Activated T-helper 1 cell treated with anti-CD3 and anti-CD28 coated beads, Interleukin-12 subunit alpha, Interleukin-12 subunit beta, Interleukin-2, Interleukin-4 antibody, amounts not matched to agents 30 ng/mL and 10 ng/mL and 1 ng/mL, durations not matched to agents 14 hours and 24 hours and 36 hours (primary cell): ENCODE measurements at regions of chr4 and their contacts with region 1.

Region 1: DNA sequence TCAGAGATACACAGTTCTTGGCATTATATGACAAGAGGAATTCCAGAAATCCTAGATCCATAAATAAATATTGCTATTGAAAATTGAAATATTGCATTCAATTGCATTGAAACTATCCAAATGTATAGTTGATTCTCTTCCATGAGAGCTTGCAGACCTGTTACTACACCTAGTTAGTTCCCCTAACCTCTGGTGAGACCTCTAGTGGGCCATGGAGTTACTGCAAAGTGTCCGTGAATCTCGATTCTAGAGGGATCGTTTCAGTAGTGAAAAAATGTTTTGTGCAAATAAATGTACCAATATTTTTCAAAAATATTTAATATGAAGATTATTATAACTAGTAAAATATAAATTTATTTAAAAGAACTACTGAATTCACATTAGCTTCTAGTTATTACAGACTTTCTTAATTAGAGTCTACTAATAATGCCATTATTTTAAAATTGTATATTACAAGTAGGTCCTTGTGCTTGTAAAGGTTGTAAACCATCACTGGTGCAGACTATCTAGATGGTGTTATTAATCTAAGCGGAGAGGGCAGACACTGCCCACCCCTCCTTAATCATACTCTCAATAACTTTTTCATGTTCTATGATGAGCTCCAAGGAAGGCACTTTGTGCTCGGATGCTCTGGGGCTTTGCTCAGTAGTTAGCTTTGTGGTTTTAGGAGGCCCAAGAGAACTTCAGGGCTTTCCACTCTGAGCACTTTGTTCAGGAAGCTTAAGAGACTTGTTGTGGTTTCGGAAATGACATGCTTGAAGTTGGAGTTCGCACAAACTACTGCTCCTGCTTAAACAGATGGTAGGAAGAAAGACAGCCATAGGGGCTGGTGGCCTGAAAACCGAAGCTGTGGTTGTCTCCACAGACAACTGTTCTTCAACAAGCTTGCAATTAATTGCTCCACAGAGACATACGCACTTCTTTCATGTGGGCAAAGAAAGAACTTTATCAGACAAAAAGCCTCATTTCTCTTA is 42.8 kb downstream of the IL21 start:
- DNase-seq: peak; percentile 70
- H3K4me3 Mint-ChIP-seq: peak overlapping the region; percentile 80
- H3K27ac Mint-ChIP-seq: peak overlapping the region; percentile 96
- H3K4me1 Mint-ChIP-seq: peaks cover 63% of the 10 kb centered on the region
- H3K27me3 Mint-ChIP-seq: no peaks in the 10 kb centered on the region

Region 2: GRCh38 chr4:121900132-121900983 is 677.7 kb before region 1 on chr4:
- intact Hi-C with region 1: loop called (anchors 1 kb)
- DNase-seq: peak; percentile 24
- H3K4me3 Mint-ChIP-seq: no peak overlapping the region
- H3K27ac Mint-ChIP-seq: no peak overlapping the region
- H3K4me1 Mint-ChIP-seq: peaks cover 6% of the 10 kb centered on the region
- H3K27me3 Mint-ChIP-seq: peaks cover 7% of the 10 kb centered on the region

Region 3: GRCh38 chr4:122205690-122206089 is 372.4 kb before region 1 on chr4:
- intact Hi-C with region 1: loop called (anchors 5 kb)
- DNase-seq: no peak
- H3K4me3 Mint-ChIP-seq: no peak overlapping the region
- H3K27ac Mint-ChIP-seq: no peak overlapping the region
- H3K4me1 Mint-ChIP-seq: no peaks in the 10 kb centered on the region
- H3K27me3 Mint-ChIP-seq: no peaks in the 10 kb centered on the region

Region 4: DNA sequence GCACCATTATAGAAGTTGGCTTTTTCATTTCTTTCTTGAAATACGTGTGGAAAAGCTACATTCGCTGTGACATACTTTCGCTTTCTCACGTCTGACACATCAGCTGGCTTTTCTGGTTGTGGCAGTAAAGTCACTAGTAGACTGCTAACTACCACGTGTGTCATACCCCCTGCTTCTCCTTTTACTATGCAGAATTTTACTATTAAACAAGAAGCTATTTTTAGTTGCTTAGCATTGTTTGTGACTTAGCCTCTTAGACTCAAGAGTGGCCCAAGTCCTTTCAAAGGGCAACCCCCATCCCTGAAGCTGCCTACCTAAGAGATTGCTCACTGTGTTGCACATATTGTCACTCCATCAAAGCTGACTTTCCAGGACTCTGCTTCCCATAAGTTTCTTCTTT is 119.5 kb before region 1 on chr4:
- intact Hi-C with region 1: loop called (anchors 1 kb)
- DNase-seq: peak; percentile 29
- H3K4me3 Mint-ChIP-seq: peak overlapping the region; percentile 76
- H3K27ac Mint-ChIP-seq: peak overlapping the region; percentile 87
- H3K4me1 Mint-ChIP-seq: peaks cover 46% of the 10 kb centered on the region
- H3K27me3 Mint-ChIP-seq: no peaks in the 10 kb centered on the region

Region 5: DNA sequence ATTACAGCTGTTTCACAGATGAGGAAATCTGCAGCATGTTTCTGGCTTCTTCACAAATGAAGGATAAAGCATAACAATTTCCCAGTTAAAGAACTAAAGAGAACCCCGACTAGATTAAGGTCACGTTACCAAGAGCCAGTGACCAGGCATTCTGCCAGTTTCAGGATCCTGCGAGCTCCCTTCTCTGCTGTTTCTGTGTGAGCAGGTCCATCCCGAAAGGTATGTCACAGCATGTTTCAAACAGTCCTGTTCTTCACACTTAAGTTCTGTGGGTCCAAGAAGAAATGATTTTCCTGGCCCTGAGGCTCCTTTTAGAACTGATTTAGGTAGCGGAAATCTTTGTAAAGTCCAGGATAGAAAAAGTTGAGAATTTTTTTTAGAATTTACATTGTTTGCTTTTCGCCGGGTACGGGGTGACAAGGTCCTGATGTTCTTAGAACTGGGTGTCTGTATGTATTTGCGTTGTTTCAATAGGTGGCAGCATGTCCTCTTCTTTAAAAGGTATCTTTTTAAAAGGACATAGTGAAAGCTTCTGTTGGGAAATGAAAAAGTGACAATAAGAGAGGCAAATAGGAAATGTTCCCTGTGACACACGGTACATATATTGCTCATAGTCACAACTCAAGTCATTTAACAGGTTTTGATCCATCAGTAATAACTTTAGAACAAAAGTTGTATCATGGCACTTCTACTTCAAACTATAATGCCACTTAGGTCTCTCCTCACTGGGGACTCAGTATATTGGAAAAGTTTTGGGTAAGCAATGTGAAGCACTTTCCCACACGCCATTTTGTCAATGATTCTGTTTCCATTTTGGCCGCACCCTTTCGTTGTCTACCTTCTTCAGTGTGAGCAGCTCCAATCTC is 24.4 kb after region 1 on chr4:
- intact Hi-C with region 1: loop called (anchors 1 kb)
- DNase-seq: no peak
- H3K4me3 Mint-ChIP-seq: peak overlapping the region; percentile 54
- H3K27ac Mint-ChIP-seq: peak overlapping the region; percentile 55
- H3K4me1 Mint-ChIP-seq: peaks cover 43% of the 10 kb centered on the region
- H3K27me3 Mint-ChIP-seq: no peaks in the 10 kb centered on the region

Region 6: DNA sequence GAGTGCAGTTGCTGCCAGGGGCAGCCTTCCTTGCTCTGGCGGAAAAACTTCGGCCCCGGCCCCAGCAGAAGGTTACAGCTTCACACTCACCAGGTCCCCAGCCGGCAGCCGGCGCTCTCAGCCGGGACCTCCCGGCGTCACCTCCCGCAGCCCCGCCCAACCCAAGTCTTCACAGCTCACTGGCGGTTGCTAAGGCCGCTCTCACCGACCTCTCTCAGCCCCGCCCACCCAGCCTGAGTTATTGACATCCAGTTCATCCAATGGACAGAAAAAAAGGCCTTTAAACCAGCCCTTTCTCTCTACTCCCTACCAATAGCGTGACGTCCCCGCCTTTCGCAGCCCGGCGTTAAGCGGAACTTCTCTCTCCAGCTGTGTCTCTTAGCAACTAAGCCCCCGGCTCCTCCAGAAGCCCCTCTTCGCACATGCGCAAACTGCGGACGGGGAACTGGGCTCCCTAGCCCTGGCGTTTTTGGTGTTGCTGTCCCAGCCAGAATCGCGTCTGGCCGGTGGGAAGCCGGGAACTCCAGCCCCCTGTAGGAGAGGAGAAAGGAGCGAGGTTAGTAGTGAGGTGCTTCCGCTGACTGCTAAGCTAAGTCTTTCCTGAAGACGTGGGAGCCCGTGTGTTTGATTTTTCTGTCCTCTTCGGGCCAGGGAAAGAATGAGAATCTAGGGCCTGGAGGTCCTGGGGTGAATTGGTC is 154.4 kb after region 1 on chr4 and contains the start of gene BBS12:
- intact Hi-C with region 1: loop called (anchors 1 kb)
- DNase-seq: peak; percentile 98
- H3K4me3 Mint-ChIP-seq: peak within 1 kb of the TSS; percentile 94
- H3K27ac Mint-ChIP-seq: peak within 1 kb of the TSS; percentile 95
- H3K4me1 Mint-ChIP-seq: peaks cover 37% of the 10 kb centered on the region
- H3K27me3 Mint-ChIP-seq: no peaks in the 10 kb centered on the region
- total RNA-seq, gene BBS12: 4.4 and 6.2 TPM in 2 replicates

Region 7: GRCh38 chr4:123995936-123996335 is 1417.8 kb after region 1 on chr4:
- intact Hi-C with region 1: no loop called
- DNase-seq: no peak
- H3K4me3 Mint-ChIP-seq: no peak overlapping the region
- H3K27ac Mint-ChIP-seq: no peak overlapping the region
- H3K4me1 Mint-ChIP-seq: no peaks in the 10 kb centered on the region
- H3K27me3 Mint-ChIP-seq: no peaks in the 10 kb centered on the region